Activated T-helper 1 cell treated with anti-CD3 and anti-CD28 coated beads, Interleukin-12 subunit alpha, Interleukin-12 subunit beta, Interleukin-2, Interleukin-4 antibody, amounts not matched to agents 30 ng/mL and 10 ng/mL and 1 ng/mL, durations not matched to agents 14 hours and 24 hours and 36 hours (primary cell): ENCODE measurements at regions of chr2 and their contacts with region 1.

Region 1: GRCh38 chr2:171433763-171434670 is at the starts of genes DCAF17 and METTL8:
- DNase-seq: peak; percentile 93
- H3K4me3 Mint-ChIP-seq: peak within 1 kb of the TSS; percentile 95
- H3K27ac Mint-ChIP-seq: peak within 1 kb of the TSS; percentile 98
- H3K4me1 Mint-ChIP-seq: peaks cover 28% of the 10 kb centered on the region
- H3K27me3 Mint-ChIP-seq: no peaks in the 10 kb centered on the region
- total RNA-seq, gene DCAF17: 23.9 and 24.9 TPM in 2 replicates
- total RNA-seq, gene METTL8: 31.8 and 36.4 TPM in 2 replicates

Region 2: DNA sequence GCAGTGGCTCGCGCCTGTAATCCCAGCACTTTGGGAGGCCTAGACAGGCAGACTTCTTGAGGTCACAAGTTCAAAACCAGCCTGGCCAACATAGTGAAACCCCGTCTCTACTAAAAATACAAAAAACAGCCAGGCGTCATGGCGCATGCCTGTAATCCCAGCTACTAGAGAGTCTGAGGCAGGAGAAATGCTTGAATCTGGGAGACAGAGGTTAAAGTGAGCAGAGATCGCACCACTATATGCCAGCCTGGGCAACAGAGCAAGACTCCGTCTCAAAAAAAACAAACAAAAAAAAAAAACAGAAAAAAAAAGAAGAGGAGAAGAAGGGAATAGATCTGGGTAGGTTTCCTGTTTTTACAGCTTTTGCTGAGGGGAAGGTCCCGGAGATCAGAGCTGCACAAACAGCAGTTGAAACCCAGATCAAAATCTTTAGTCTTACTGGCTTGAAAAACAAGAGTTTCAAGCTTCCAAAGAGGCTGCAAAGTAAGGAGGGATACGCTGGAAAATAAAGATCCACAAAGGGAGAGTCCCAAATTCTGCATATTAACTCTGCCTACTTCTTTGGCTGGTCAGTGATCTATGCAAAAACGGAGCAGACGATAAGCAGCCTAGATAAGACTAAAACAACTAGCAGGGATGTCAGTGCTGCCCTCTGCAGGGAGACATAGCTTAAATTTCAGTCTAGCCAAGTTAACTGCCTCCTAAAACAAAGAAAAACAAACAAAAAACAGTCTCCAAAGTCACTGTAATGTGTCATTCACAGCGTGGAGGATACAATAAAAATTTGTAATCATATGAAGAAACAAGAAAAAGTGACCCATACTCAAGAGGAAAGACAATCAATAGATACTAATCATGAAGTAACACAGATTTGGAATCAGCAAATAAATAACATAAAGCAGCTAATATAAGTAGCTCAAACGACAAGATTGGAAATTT is 347.4 kb before region 1 on chr2:
- intact Hi-C with region 1: loop called (anchors 5 kb)
- DNase-seq: peak; percentile 23
- H3K4me3 Mint-ChIP-seq: peak overlapping the region; percentile 77
- H3K27ac Mint-ChIP-seq: peak overlapping the region; percentile 82
- H3K4me1 Mint-ChIP-seq: peaks cover 52% of the 10 kb centered on the region
- H3K27me3 Mint-ChIP-seq: no peaks in the 10 kb centered on the region

Region 3: DNA sequence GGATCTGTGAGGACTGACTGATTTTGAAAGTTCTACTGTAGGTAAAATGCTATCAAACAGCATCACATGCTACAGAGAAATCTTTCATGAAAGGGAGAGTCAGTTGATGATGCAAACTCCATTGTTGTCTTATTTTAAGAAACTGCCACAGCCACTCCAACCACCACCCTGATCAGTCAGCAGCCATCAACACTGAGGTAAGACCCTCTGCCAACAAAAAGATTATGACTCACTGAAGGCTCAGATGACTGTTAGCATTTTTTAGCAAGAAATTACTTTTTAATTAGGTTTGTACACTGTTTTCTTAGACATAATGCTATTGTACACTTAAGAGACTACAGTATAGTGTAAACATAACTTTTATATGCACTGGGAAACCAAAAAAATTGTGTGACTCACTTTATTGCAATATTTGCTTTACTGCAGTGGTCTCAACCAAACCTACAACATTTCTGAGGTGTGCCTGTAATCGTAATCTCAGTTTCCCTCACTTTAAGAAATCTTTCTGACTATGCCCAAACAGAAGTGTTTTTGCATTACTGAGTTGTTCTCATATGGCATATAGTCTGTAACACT is 43.0 kb before region 1 on chr2:
- intact Hi-C with region 1: loop called (anchors 1 kb)
- DNase-seq: no peak
- H3K4me3 Mint-ChIP-seq: no peak overlapping the region
- H3K27ac Mint-ChIP-seq: no peak overlapping the region
- H3K4me1 Mint-ChIP-seq: peaks cover 17% of the 10 kb centered on the region
- H3K27me3 Mint-ChIP-seq: no peaks in the 10 kb centered on the region

Region 4: DNA sequence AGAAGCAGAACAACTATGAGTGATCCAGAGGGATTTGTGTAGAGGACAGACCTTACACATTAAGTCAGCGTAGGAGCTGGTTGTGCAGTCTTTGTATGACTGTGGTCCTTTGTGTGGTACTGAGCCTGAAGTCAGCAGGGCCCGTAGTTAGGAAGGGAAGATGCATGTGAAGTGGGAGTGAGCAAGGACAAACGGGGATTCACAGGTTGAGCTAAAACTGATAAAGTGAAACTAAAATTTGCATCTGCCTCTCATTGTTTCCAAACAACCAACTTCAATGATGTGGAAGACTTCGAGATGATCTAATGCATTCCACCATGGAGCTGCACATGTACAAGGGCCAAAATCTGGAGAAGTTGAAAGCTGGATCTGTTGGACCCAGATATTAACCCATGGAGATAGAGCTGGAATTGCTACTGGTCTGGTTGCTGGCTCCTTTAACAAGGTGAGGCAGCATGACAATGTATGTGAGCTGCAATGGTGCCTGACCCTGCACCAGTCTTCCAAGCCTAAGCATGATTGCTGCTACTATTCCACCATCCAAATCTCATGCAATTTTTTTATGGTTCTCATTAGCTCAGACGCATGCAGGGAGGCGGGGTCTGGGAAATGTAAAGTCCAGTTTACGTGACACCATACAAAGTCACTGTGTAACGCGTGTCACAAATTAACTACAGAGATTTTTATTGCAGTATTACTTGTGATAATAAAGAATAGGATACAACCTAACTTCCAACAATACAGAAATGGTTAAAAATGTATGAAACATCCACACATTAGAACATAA is 76.1 kb after region 1 on chr2:
- intact Hi-C with region 1: no loop called
- DNase-seq: no peak
- H3K4me3 Mint-ChIP-seq: no peak overlapping the region
- H3K27ac Mint-ChIP-seq: no peak overlapping the region
- H3K4me1 Mint-ChIP-seq: peaks cover 5% of the 10 kb centered on the region
- H3K27me3 Mint-ChIP-seq: peaks cover under 1% of the 10 kb centered on the region

Region 5: GRCh38 chr2:171687287-171688128 is 253.5 kb after region 1 on chr2 and contains the start of gene DYNC1I2:
- intact Hi-C with region 1: loop called (anchors 5 kb)
- DNase-seq: peak; percentile 63
- H3K4me3 Mint-ChIP-seq: peak within 1 kb of the TSS; percentile 85
- H3K27ac Mint-ChIP-seq: peak within 1 kb of the TSS; percentile 84
- H3K4me1 Mint-ChIP-seq: peaks cover 20% of the 10 kb centered on the region
- H3K27me3 Mint-ChIP-seq: peaks cover 10% of the 10 kb centered on the region
- total RNA-seq, gene DYNC1I2: 49.3 and 49.4 TPM in 2 replicates

Region 6: DNA sequence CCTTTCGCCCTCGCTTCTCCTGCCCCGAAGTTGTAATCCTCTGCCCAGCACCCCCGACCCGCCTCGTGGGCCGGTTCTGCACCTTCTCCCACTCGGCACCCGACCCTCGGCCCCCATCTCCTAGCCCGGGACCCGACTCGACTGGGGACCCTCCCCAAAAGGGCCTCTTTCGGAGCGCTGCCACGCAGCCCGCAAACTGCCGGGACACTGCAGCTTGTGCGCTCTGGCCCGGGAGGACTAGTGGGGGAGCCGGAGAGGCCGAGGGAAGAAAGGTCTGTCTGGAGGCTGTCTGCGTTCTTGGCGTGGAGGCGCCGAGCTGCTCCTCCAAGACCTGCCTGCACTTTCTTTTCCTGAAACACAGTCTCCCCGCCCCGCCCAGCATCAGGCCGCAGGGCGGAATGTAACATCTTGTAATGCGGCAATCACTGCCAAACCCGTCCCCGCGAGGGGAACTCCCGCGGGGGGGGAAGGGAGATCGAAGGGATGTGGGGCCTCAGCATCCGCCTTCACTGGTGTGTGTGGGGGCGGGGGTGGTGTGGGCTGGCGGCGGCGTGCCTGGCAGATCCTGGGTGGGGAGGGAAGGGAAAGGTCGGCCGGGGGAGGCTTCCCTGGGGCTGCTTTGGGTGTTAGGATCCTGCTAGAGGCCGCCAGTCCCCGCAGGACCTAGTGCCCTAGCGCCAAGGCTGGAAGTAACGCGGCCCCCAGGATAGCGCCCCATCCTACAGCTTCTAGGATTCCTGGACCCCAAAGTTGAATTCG is 661.3 kb after region 1 on chr2:
- intact Hi-C with region 1: no loop called
- DNase-seq: peak; percentile 60
- H3K4me3 Mint-ChIP-seq: peak overlapping the region; percentile 81
- H3K27ac Mint-ChIP-seq: peak overlapping the region; percentile 48
- H3K4me1 Mint-ChIP-seq: peaks cover 39% of the 10 kb centered on the region
- H3K27me3 Mint-ChIP-seq: peaks cover 73% of the 10 kb centered on the region